SK-N-SH (cell line): ENCODE measurements at regions of chr1 and their contacts with region 1.

Region 1: DNA sequence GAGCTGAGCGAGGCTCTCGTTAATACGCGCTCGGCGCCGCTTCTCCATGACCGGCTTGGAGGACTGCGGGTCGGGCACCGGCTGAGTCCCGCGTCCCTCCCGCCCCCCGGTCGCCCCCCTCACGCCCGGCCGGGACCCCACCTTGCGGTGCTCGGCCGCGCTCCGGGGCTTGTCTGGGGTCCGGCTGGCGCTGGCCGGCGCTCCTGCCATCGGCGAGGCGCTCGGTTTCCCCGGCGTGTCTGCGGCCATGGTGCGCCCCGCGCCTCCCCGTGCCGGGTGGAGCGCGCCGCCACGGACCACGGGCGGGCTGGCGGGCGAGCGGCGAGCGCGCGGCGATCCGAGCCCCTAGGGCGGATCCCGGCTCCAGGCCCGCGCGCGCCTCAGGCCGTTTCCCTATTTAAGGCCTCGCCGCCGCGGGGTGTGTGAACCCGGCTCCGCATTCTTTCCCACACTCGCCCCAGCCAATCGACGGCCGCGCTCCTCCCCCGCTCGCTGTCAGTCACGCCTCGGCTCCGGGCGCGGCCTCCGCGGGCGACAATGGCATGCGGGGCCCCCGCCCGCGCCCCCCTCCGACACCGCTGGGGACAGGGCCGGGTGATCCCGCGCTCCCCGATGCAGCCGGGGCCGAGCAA is at the start of gene HES4:
- DNase-seq: peak; percentile 73
- H3K4me3 ChIP-seq: peak within 1 kb of the TSS; percentile 33 to 37; a peak in 3 of 4 replicates
- H3K27ac ChIP-seq: peak within 1 kb of the TSS in 1 of 2 experiments; percentile 39; a peak in 2 of 4 replicates
- H3K4me1 ChIP-seq: peaks cover 0 to 27% of the 10 kb centered on the region in 2 experiments; a peak in 1 of 4 replicates
- H3K27me3 ChIP-seq: peaks cover 12% of the 10 kb centered on the region; the same call in 1 of the 2 replicates
- CTCF ChIP-seq: no peak
- EP300 ChIP-seq: no peak
- RAD21 ChIP-seq: no peak
- polyA plus RNA-seq, gene HES4: 4.2 and 4.7 TPM in 2 replicates

Region 2: DNA sequence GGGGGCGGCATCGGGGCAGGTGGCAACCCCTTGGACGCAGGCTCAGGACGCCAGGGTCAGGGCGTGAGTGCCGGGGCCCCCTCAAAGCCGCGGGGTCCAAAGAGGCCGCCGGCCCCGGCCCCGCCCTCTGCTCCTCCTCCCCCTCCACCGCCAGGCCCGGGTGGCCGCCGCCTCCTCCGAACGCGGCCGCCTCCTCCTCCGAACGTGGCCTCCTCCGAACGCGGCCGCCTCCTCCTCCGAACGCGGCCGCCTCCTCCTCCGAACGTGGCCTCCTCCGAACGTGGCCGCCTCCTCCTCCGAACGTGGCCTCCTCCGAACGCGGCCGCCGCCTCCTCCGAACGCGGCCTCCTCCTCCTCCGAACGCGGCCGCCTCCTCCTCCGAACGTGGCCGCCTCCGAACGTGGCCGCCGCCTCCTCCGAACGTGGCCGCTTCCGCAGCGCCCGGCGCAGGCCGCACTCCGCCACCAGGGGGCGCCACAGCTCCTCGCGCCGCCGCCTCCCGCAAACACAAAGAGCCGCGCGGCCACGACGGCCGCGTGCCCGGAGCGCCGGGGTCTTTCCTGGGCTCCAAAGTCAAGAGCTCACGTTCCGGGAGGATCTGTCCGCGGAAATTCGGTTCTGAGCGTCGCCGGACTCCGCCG is 95.4 kb before region 1 on chr1:
- CTCF ChIA-PET with region 1: interaction called, 10 read pairs
- POLR2A ChIA-PET with region 1: no interaction called
- DNase-seq: peak; percentile 93
- H3K4me3 ChIP-seq: peak overlapping the region; percentile 42 to 44; a peak in 3 of 4 replicates
- H3K27ac ChIP-seq: no peak overlapping the region; a peak in 1 of 4 replicates
- H3K4me1 ChIP-seq: peaks cover 0 to 18% of the 10 kb centered on the region in 2 experiments; a peak in 1 of 4 replicates
- H3K27me3 ChIP-seq: no peaks in the 10 kb centered on the region
- CTCF ChIP-seq: peak; percentile 62
- EP300 ChIP-seq: no peak
- RAD21 ChIP-seq: peak; percentile 82

Region 3: GRCh38 chr1:1019122-1019999 is 19.5 kb after region 1 on chr1:
- CTCF ChIA-PET with region 1: interaction called, 46 read pairs
- POLR2A ChIA-PET with region 1: interaction called, 5 read pairs
- DNase-seq: peak; percentile 99
- H3K4me3 ChIP-seq: peak overlapping the region in 1 of 2 experiments; percentile 50; a peak in 2 of 4 replicates
- H3K27ac ChIP-seq: peak overlapping the region in 1 of 2 experiments; percentile 81; a peak in 2 of 4 replicates
- H3K4me1 ChIP-seq: peaks cover 0 to 10% of the 10 kb centered on the region in 2 experiments; a peak in 1 of 4 replicates
- H3K27me3 ChIP-seq: no peaks in the 10 kb centered on the region
- CTCF ChIP-seq: peak; percentile 44
- EP300 ChIP-seq: no peak
- RAD21 ChIP-seq: no peak

Region 4: GRCh38 chr1:1040004-1040991 is 40.5 kb after region 1 on chr1:
- CTCF ChIA-PET with region 1: interaction called, 10 read pairs
- POLR2A ChIA-PET with region 1: interaction called, 4 read pairs
- DNase-seq: peak; percentile 98
- H3K4me3 ChIP-seq: peak overlapping the region; percentile 39 to 41; a peak in 3 of 4 replicates
- H3K27ac ChIP-seq: no peak overlapping the region
- H3K4me1 ChIP-seq: peaks cover 0 to 18% of the 10 kb centered on the region in 2 experiments; a peak in 1 of 4 replicates
- H3K27me3 ChIP-seq: no peaks in the 10 kb centered on the region
- CTCF ChIP-seq: 0 out of 2 replicates have a peak, but pooled peaks have one; percentile 8
- EP300 ChIP-seq: no peak
- RAD21 ChIP-seq: no peak; the same call in 1 of the 2 replicates

Region 5: DNA sequence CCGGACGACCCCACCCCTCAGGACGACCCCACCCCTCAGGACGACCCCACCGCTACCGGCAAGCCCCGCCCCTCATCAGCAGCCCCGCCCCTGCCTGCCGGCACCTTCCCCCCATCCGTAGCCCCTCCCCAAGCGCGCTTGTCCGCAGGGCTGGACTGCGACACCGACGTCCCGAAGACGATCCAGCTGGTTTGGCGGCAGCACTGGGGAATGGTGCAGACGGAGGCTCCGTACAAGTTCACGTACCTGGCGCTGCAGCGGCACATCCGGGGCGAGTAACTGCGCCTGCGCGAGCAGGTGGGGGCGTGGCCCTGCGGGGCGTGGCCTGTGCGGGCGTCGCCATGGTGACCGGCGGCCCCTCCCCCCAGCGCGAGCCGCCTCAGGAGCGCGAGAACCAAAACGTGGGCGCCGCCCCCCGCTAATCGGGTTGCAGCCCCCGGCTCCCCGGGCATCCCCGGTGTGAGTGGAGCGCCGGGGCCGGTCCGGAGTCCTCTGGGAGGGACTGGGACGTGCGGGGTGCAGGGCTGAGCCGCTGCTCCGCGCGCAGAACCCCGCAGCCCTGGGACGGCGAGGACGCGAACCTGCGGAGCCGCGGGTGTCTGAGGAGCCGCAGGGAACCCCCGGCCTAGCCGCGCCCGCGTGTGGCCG is 69.3 kb after region 1 on chr1:
- CTCF ChIA-PET with region 1: interaction called, 44 read pairs
- POLR2A ChIA-PET with region 1: no interaction called
- DNase-seq: peak; percentile 95
- H3K4me3 ChIP-seq: peak overlapping the region; percentile 46 to 59; a peak in 3 of 4 replicates
- H3K27ac ChIP-seq: no peak overlapping the region; a peak in 1 of 4 replicates
- H3K4me1 ChIP-seq: peaks cover 0 to 4% of the 10 kb centered on the region in 2 experiments; a peak in 1 of 4 replicates
- H3K27me3 ChIP-seq: 0 out of 2 replicates have a peak, but pooled peaks cover 12% of the 10 kb centered on the region
- CTCF ChIP-seq: no peak
- EP300 ChIP-seq: no peak
- RAD21 ChIP-seq: no peak